Endothelial cell of umbilical vein (primary cell): ENCODE measurements at regions of chr11 and their contacts with region 1.

Region 1: DNA sequence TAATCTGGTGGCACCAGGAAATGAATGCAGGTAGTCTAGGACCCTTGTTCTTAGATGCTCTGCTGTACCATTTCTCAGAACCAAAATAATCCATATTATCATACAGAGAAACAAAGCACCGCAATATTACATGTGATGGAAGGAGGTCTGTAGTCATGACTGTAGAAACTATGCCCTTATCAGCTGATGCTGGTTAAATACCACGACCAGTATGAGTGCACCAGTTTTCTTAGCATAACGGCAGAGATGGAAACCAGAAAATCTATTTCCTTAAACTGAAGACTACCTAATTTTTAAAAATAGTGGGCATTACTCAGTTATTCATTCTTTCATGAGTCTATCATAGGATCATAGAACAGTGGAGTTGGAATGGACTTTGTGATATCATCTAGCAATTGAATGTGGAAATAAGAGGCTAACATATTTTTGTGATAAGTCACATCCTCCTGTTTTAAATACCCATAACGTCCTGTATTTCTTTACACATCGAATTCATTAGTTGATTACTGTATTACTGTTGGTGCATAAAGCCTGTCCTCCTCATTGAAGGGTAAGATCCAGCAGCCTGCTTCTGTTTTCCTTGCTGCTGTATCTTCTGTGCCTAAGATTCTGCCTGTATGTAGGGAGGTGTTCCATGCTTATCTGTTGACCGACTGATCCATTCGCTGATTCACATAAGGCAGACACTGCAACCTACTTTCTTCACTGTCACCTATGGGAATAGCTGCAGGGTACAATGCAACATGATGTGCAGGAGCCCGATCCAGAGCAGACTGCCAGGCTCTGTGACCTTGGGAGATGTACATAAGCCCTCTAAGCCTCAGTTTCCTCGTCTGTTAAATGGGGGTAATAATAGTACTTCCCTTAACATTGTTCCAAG is 15.3 kb downstream of the JHY start:
- DNase-seq: peak; percentile 55
- H3K4me3 ChIP-seq: no peak overlapping the region
- H3K27ac ChIP-seq: peak overlapping the region; percentile 70
- H3K4me1 ChIP-seq: peaks cover 27% of the 10 kb centered on the region
- H3K27me3 ChIP-seq: no peaks in the 10 kb centered on the region
- CTCF ChIP-seq: no peak
- POLR2A ChIP-seq: no peak

Region 2: GRCh38 chr11:122882857-122883645 is 14.8 kb before region 1 on chr11:
- CTCF ChIA-PET with region 1: no interaction called
- POLR2A ChIA-PET with region 1: no interaction called
- dilution Hi-C with region 1: no loop called
- intact Hi-C with region 1: loop called (anchors 1 kb)
- DNase-seq: peak; percentile 50
- H3K4me3 ChIP-seq: peak overlapping the region; percentile 58 to 72 (median 71)
- H3K27ac ChIP-seq: peak overlapping the region; percentile 66
- H3K4me1 ChIP-seq: peaks cover 8% of the 10 kb centered on the region
- H3K27me3 ChIP-seq: peaks cover 2 to 4% of the 10 kb centered on the region in 2 experiments
- CTCF ChIP-seq: no peak
- POLR2A ChIP-seq: peak; percentile 53